Activated CD8-positive, alpha-beta memory T cell treated with anti-CD3 and anti-CD28 coated beads, Interleukin-2, amount 10 ng/mL, durations not matched to agents 7 days and 5 days (primary cell): ENCODE measurements at regions of chr19 and their contacts with region 1.

Region 1: DNA sequence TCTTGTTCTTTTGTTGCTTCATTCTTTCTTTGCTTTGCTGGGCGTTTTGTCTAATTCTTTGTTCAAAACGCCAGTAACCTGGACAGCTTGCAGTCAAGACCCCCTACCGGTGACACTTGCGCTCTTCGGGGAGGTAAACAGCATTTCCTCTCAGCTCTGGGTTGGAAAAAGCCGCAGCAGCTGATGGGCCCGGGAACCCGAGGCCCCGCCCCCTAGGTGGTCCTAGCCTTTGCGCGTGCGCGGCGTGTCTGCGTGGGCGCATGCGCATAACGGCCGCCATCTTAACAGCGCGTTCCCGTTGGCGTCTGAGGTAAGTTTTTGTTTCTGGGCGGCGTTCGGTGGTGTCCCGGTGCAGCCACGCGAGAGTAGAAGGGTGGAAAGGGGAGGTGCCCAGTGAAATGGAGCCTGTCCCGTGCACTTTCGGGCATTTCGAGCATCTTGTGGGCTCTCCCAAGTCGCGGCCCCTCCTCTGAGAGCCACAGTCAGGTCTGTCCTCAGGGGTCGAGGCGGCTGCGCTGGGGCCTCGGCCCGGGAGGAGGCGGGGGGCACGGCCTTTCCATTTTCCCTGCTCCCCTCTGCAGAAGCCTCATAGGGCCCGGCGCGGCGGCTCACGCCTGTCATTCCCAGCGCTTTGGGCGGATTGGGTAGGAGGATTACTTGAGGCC is at the start of gene ZNF559:
- DNase-seq: peak; percentile 97
- ATAC-seq: peak; percentile 99
- H3K4me3 Mint-ChIP-seq: peak within 1 kb of the TSS; percentile 86
- H3K27ac Mint-ChIP-seq: peak within 1 kb of the TSS; percentile 97
- H3K4me1 Mint-ChIP-seq: peaks cover 28% of the 10 kb centered on the region
- H3K27me3 Mint-ChIP-seq: no peaks in the 10 kb centered on the region
- total RNA-seq, gene ZNF559: 10.9 to 14.9 TPM

Region 2: GRCh38 chr19:9309974-9310446 is 14.0 kb before region 1 on chr19:
- CTCF ChIA-PET with region 1: interaction called, 15 read pairs
- DNase-seq: no peak
- ATAC-seq: peak; percentile 70
- H3K4me3 Mint-ChIP-seq: peak overlapping the region; percentile 91
- H3K27ac Mint-ChIP-seq: peak overlapping the region; percentile 98
- H3K4me1 Mint-ChIP-seq: peaks cover 19% of the 10 kb centered on the region
- H3K27me3 Mint-ChIP-seq: no peaks in the 10 kb centered on the region